ENCODE measurements at regions of chr5 and their contacts with region 1.

Region 1: GRCh38 chr5:111158105-111158744 is 66.0 kb upstream of the CAMK4 start:
- DNase-seq: peak; percentile 82
- H3K4me3 Mint-ChIP-seq: peak overlapping the region; percentile 17
- H3K27ac Mint-ChIP-seq: no peak overlapping the region
- H3K4me1 Mint-ChIP-seq: peaks cover 2% of the 10 kb centered on the region
- H3K27me3 Mint-ChIP-seq: no peaks in the 10 kb centered on the region

Region 2: DNA sequence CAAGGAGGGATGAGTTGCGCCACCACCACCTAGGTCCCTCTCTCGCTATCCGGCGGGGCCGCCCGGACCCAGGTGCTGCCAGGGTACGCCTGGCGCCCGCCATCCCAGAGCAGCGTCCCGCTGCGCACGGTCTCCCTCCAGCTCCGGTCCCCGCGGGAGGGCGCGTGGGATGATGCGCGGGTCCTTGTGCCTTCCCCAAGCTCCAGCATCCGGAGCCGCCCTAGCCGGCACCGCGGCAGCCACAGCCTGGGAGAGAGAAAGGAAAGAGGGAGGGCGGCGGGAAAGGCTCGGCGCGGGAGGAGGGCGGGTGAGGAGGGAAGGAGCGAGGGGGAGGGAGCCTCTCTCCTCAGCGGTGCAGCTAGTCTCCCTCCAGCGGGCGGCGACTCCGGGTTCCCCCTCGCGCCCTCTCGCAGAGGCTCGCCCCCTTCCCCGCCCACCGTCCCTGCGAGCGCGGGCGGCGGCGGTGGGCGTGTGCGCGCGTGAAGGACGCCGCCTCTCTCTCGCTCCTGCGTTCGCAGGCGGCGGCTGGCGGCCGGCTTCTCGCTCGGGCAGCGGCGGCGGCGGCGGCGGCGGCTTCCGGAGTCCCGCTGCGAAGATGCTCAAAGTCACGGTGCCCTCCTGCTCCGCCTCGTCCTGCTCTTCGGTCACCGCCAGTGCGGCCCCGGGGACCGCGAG is 65.8 kb after region 1 on chr5 and contains the start of gene CAMK4:
- CTCF ChIA-PET with region 1: interaction called, 12 read pairs
- POLR2A ChIA-PET with region 1: interaction called, 3 read pairs
- intact Hi-C with region 1: loop called (anchors 2 kb)
- DNase-seq: peak; percentile 77
- H3K4me3 Mint-ChIP-seq: peak within 1 kb of the TSS; percentile 89
- H3K27ac Mint-ChIP-seq: peak within 1 kb of the TSS; percentile 90
- H3K4me1 Mint-ChIP-seq: peaks cover 34% of the 10 kb centered on the region
- H3K27me3 Mint-ChIP-seq: no peaks in the 10 kb centered on the region
- total RNA-seq, gene CAMK4: 33.3 to 36.5 TPM

Region 3: GRCh38 chr5:111237470-111237869 is 79.2 kb after region 1 on chr5:
- CTCF ChIA-PET with region 1: interaction called, 13 read pairs
- POLR2A ChIA-PET with region 1: no interaction called
- intact Hi-C with region 1: no loop called
- DNase-seq: no peak
- H3K4me3 Mint-ChIP-seq: peak overlapping the region; percentile 61
- H3K27ac Mint-ChIP-seq: peak overlapping the region; percentile 83
- H3K4me1 Mint-ChIP-seq: peaks cover 92% of the 10 kb centered on the region
- H3K27me3 Mint-ChIP-seq: no peaks in the 10 kb centered on the region

Region 4: DNA sequence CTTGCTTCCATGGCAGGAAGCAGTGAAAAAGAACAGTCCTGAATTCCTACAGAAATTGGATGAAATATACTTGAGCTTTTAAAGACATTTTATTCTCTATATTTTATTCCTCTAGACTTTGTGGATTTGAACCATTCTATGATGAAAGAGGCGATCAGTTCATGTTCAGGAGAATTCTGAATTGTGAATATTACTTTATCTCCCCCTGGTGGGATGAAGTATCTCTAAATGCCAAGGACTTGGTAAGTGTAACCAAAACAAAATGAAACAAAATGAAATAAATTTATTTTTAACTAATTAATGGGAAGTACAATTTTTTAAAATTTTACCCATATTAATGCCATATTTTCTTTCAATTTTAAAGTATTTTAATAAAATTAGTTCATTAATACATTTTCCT is 320.0 kb after region 1 on chr5:
- CTCF ChIA-PET with region 1: interaction called, 11 read pairs
- POLR2A ChIA-PET with region 1: no interaction called
- intact Hi-C with region 1: loop called (anchors 2 kb)
- DNase-seq: no peak
- H3K4me3 Mint-ChIP-seq: no peak overlapping the region
- H3K27ac Mint-ChIP-seq: no peak overlapping the region
- H3K4me1 Mint-ChIP-seq: no peaks in the 10 kb centered on the region
- H3K27me3 Mint-ChIP-seq: no peaks in the 10 kb centered on the region

Region 5: DNA sequence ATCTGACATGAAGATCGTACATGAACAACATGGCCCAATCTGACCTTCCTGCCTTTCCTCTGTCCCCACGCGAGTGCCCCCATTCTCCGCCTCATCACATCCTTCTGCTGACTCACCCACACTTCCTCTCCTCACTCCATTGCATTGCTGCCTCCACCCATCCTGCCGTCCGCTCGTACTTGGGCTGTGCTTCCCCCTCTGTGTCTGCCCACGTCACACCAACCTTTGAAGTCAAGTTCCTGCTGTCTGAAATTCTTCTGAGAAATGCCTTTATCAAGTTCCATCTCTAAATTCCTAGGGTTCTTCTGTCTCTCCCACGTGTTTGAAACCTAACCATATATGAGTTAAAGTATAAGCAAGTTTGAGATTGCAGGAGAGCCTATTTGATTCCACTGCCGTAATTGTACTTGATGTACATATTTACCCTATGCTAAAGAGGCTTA is 372.1 kb after region 1 on chr5:
- CTCF ChIA-PET with region 1: interaction called, 3 read pairs
- POLR2A ChIA-PET with region 1: no interaction called
- intact Hi-C with region 1: loop called (anchors 5 kb)
- DNase-seq: peak; percentile 88
- H3K4me3 Mint-ChIP-seq: peak overlapping the region; percentile 54
- H3K27ac Mint-ChIP-seq: peak overlapping the region; percentile 85
- H3K4me1 Mint-ChIP-seq: peaks cover 17% of the 10 kb centered on the region
- H3K27me3 Mint-ChIP-seq: no peaks in the 10 kb centered on the region

Region 6: GRCh38 chr5:112146323-112147226 is 988.4 kb after region 1 on chr5:
- CTCF ChIA-PET with region 1: no interaction called
- POLR2A ChIA-PET with region 1: no interaction called
- intact Hi-C with region 1: loop called (anchors 1 kb)
- DNase-seq: peak; percentile 64
- H3K4me3 Mint-ChIP-seq: no peak overlapping the region
- H3K27ac Mint-ChIP-seq: peak overlapping the region; percentile 45
- H3K4me1 Mint-ChIP-seq: no peaks in the 10 kb centered on the region
- H3K27me3 Mint-ChIP-seq: peaks cover 9% of the 10 kb centered on the region